Left colon (tissue), 2 donors: ENCODE measurements at regions of chr3 and their contacts with region 1.

Region 1: DNA sequence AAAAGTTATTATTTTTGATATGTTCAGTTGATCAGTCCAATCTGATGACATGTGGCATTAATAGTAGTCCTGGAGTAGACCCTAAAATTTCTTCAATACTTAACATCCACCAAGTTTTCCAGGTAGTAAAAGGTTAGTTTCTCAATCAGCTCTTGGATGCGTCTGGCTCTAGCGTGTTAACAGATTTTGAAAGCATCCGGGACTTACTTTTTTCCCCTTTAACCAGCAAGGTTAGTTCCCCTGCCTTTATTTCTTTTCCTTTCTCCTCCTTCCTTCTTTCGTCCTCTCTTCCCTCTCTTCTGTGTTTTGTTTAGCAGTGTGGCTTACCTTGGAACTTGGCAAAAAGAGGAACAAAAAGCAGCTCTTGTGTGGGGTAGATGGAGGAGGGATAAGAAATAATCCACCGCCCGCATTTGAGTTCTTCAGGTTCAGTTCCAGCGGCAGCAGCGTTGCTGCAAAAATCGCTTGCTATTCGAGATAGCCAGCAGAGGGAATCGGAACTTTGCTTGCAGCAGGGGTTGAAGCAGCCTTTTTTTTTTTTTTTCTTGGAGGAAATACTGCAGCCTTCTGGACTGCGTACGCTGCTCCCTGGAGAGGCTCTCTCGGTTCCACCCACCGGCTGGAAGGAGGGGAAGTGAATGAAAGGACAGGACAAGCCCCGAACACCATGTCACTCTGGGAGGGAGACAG is at the start of gene RBMS3:
- DNase-seq: peak; percentile 63 to 86
- ATAC-seq: peak; percentile 95
- total RNA-seq, gene RBMS3: 7.1 to 11.5 TPM

Region 2: DNA sequence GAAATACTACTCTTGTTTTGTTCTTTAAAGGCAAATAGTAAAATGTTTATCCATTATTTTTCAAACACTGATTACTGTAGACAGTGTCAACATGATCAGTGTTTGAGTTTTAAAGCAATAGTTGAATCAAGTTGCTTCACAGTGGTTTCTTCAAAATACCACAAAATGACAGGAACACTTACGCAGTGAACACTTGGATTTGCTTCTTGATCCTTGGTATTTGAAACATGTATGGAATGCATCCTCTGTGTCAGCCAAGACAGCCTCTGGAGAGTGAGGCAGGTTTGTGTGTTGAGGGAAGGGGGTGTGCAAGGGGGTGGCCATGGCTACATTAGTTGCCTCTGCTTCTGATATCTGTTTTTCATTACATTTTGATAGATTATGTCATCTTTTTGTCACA is 413.3 kb after region 1 on chr3:
- intact Hi-C with region 1: loop called in 1 of 2 experiments (anchors 10 kb)
- DNase-seq: no peak
- ATAC-seq: no peak

Region 3: DNA sequence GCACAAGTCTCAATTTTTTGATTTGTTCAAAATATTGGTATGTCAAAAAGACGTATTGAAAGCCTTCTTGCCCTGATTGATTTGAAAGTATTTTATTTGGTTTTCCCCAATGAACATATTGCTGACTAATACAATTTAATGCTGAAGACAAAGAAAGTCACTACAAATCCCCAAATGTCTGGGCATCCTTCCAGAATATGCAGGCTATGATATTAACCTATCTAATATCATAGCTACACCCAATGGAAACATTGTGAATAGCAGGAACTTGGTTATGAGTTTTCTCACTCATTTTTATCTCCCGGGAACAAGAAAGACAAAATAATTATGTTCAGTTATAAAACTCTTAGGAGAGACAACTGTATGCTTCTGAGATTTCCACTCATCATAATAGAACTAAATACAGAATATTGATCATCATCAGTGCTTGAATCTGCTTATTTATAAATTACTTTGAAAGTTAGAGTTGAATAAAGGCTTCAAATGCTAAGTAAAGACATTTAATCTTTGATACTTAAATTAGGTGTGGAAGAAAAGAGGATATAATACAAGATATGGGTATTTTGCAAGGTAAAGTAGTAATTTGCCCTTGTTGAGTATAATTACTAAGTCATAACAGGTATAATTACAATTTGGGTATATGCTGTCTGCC is 484.2 kb after region 1 on chr3:
- intact Hi-C with region 1: loop called in 1 of 2 experiments (anchors 10 kb)
- DNase-seq: no peak
- ATAC-seq: no peak